Activated CD4-positive, alpha-beta T cell treated with anti-CD3 and anti-CD28 coated beads for 36 hours (primary cell): ENCODE measurements at regions of chr18 and their contacts with region 1.

Region 1: DNA sequence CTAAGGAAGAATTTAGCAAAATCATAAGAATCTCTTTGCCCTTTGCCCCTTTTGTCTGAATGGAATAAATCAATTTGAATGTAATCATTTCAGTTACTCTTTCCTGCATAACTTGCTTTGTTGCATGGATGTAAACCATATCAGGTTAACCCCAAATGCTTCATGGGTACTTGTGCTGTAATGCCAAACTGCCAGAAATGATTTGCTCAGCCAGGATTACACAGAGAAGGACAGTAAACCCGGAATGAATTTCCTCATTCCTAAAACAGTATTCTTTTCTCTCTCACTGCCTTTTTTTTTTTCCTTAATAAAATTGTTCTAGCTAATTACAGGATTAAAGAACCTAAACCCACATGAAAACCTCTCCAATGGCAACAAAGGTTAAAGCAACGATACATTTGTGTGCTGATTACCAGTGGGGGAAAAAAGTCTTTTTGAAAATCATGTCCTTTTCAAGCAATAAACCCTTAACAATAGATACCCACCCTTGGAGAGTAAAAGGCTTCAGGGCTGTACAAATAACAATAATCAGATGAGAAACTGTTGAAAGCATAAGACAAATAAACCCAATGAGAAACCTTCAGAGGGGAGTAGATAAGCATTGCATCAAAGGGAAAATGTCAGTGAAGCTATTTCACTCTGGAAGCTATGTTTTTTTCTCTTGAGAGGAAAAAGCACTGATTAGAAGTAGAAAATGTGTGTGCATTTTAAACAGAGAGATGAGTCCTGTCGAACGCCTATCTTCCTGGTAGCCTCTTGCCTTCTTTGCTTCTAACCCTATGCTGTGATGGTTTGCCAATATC is 275.3 kb downstream of the CDH2 start:
- DNase-seq: no peak
- ATAC-seq: no peak
- H3K4me3 Mint-ChIP-seq: no peak overlapping the region
- H3K27ac Mint-ChIP-seq: no peak overlapping the region
- H3K4me1 Mint-ChIP-seq: no peaks in the 10 kb centered on the region
- H3K27me3 Mint-ChIP-seq: no peaks in the 10 kb centered on the region

Region 2: DNA sequence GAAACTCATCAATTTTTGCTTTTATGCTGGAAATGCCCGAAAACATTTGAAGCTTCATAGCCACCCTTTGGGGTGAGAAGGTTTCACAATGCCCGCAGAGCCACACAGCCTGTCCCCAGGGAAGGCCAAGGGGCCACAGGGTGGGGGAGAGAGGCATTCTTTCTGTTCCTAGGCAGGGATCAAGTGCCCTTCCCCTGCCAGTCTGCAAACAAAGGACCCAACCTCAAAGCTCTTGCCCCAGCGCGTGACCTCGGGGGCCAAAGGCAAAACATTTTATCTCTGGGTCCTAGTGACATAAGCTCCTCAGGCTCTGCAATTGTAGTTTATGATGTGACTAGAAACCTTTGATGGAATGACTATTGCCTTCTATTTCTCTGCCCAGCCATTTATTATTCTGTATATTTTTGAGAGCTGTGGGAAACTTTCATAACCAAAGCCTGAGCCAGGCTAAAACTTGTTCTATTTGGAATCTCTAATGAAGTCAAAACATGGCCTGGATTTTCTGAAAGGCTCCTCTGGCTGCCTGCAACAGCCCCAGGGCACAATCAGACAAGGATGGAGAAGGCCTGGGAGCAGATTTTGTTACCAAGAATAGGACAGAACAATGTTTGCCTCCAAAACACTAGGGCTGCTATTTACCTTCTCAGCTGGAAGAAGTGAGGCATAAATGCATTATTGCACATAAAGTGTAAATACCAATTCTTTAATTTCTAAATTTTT is 1216.0 kb before region 1 on chr18:
- CTCF ChIA-PET with region 1: no interaction called
- POLR2A ChIA-PET with region 1: no interaction called
- intact Hi-C with region 1: no loop called
- DNase-seq: no peak
- ATAC-seq: no peak
- H3K4me3 Mint-ChIP-seq: no peak overlapping the region
- H3K27ac Mint-ChIP-seq: no peak overlapping the region
- H3K4me1 Mint-ChIP-seq: no peaks in the 10 kb centered on the region
- H3K27me3 Mint-ChIP-seq: peaks cover 3% of the 10 kb centered on the region

Region 3: DNA sequence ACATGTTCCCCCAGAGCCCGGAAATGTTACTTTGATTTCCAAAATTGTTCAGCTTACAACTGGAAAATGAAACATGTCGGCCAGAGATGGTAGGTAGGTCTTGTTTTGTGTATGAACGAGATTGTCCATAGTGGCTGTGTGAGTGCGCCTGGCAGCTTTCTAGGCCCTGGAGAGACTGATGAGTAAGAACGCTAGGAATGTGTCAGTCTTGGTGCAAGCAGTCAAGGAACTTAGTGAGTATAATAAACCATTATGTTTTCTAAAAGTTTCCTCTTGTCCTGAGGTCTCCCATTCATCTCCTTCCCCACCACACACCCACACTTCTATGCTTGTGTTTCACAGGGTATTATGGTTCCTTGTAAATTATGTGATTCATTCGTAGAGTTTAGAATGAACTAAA is 41.1 kb after region 1 on chr18:
- CTCF ChIA-PET with region 1: no interaction called
- POLR2A ChIA-PET with region 1: no interaction called
- intact Hi-C with region 1: loop called in 1 of 2 experiments (anchors 1 kb)
- DNase-seq: no peak
- ATAC-seq: no peak
- H3K4me3 Mint-ChIP-seq: no peak overlapping the region
- H3K27ac Mint-ChIP-seq: no peak overlapping the region
- H3K4me1 Mint-ChIP-seq: no peaks in the 10 kb centered on the region
- H3K27me3 Mint-ChIP-seq: no peaks in the 10 kb centered on the region

Region 4: GRCh38 chr18:28127763-28128663 is 226.4 kb after region 1 on chr18:
- CTCF ChIA-PET with region 1: no interaction called
- POLR2A ChIA-PET with region 1: no interaction called
- intact Hi-C with region 1: no loop called
- DNase-seq: no peak
- ATAC-seq: no peak
- H3K4me3 Mint-ChIP-seq: no peak overlapping the region
- H3K27ac Mint-ChIP-seq: no peak overlapping the region
- H3K4me1 Mint-ChIP-seq: no peaks in the 10 kb centered on the region
- H3K27me3 Mint-ChIP-seq: no peaks in the 10 kb centered on the region